Sigmoid colon (tissue), 7 donors: ENCODE measurements at regions of chr20 and their contacts with region 1.

Region 1: DNA sequence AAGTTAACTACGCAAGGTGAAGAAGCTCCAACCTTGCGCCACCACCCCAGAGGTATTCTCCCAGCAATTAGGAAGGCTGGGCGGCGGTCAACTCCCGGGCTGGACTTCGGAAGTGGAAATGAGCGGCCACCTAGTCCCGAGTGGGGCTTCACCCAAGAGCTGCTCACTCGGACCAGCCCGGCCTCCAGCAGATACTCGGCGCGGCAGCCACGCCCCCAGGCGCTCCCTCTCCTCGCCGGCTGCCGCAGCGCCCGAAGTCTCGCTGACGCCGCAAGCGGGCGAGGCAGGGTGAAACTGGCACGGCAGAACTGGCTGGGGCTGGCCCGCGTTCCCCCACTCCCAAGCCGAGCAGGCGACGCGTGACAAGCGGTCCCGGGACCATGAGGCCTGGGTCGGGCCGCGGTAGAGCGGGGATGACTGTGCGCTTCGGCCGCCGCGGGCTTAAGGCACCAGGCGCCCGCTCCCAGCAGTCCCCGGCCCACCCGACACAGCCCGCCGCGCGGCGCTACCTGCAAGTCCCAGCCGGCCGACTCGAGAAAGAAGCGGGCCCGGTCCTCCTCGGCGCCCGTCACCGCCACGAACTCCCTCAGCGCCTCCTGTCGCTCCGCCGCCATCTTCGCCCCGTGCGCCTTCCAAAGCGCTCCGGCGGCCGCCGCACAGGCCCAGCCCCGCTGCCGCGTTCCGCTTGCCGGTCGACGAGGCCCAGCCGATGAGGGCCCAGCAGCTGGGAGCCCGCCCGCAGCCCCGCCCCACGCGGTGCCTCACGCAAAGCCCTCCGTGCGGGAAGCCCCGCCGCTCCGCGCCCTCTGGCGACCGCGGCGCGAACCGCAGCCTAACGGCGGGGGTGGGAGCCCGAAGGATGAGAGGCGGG is at the start of gene NSFL1C:
- DNase-seq: peak; percentile 96
- H3K4me3 ChIP-seq: peak within 1 kb of the TSS; percentile 77 to 97 (median 92)
- H3K27ac ChIP-seq: peak within 1 kb of the TSS; percentile 84 to 89 (median 87)
- H3K4me1 ChIP-seq: peaks cover 0 to 45% (median 35%) of the 10 kb centered on the region in 4 donors
- H3K27me3 ChIP-seq: no peaks in the 10 kb centered on the region
- CTCF ChIP-seq: peak; percentile 49 to 98 (median 66)
- EP300 ChIP-seq: no peak
- POLR2A ChIP-seq: peak; percentile 32 to 35
- total RNA-seq, gene NSFL1C: 33.5 to 46.5 (median 40.5) TPM

Region 2: DNA sequence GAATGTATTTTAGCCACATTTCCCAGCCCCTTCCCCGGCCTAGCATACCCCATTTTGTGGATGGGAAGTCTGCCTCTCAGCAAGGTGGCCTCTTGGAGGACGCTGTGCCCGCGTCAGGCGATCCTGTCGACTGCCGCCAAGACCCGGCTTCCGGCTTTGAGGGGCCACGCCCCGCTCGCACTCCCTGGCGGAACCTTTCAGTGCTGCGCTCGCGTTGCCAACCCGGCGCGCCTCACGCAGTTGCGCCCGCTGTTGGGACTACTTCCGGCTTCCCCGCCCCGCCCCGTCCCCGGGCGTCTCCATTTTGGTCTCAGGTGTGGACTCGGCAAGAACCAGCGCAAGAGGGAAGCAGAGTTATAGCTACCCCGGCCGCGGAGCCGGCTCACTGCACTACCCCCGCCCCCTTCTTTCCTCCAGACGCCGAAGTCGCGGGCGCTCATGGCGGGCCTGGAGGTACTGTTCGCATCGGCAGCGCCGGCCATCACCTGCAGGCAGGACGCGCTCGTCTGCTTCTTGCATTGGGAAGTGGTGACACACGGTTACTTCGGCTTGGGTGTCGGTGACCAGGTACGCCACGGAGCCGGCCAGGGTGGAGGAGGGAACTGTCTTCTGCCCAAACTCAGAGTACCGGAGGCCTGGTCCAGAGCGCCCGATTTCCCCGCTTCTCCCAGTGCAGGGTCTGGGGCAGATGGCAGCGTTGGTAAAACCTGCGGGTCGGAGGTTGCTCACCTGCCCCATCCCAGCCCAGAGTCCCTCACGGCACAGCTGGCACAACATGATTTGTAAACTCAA is 347.9 kb before region 1 on chr20 and contains the start of gene PSMF1:
- intact Hi-C with region 1: loop called (anchors 2 kb)
- DNase-seq: peak; percentile 97
- H3K4me3 ChIP-seq: peak within 1 kb of the TSS; percentile 95 to 99 (median 97)
- H3K27ac ChIP-seq: peak within 1 kb of the TSS; percentile 83 to 86 (median 84)
- H3K4me1 ChIP-seq: peaks cover 0 to 52% (median 47%) of the 10 kb centered on the region in 4 donors
- H3K27me3 ChIP-seq: no peaks in the 10 kb centered on the region
- CTCF ChIP-seq: peak in 1 of 4 experiments; percentile 11
- EP300 ChIP-seq: no peak
- POLR2A ChIP-seq: peak in 1 of 2 donors; percentile 37
- total RNA-seq, gene PSMF1: 54.2 to 148 (median 110) TPM

Region 3: GRCh38 chr20:1392823-1393506 is 73.5 kb before region 1 on chr20 and contains the start of gene FKBP1A:
- intact Hi-C with region 1: loop called (anchors 2 kb)
- DNase-seq: peak; percentile 96
- H3K4me3 ChIP-seq: peak within 1 kb of the TSS; percentile 62 to 89 (median 83)
- H3K27ac ChIP-seq: peak within 1 kb of the TSS; percentile 81 to 83 (median 82)
- H3K4me1 ChIP-seq: peaks cover 0 to 53% (median 45%) of the 10 kb centered on the region in 4 donors
- H3K27me3 ChIP-seq: peaks cover 0 to 9% (median 0%) of the 10 kb centered on the region in 3 donors
- CTCF ChIP-seq: peak in 1 of 4 experiments; percentile 16
- EP300 ChIP-seq: no peak
- POLR2A ChIP-seq: peak; percentile 35 to 40
- total RNA-seq, gene FKBP1A: 71.7 to 118 (median 85.3) TPM

Region 4: DNA sequence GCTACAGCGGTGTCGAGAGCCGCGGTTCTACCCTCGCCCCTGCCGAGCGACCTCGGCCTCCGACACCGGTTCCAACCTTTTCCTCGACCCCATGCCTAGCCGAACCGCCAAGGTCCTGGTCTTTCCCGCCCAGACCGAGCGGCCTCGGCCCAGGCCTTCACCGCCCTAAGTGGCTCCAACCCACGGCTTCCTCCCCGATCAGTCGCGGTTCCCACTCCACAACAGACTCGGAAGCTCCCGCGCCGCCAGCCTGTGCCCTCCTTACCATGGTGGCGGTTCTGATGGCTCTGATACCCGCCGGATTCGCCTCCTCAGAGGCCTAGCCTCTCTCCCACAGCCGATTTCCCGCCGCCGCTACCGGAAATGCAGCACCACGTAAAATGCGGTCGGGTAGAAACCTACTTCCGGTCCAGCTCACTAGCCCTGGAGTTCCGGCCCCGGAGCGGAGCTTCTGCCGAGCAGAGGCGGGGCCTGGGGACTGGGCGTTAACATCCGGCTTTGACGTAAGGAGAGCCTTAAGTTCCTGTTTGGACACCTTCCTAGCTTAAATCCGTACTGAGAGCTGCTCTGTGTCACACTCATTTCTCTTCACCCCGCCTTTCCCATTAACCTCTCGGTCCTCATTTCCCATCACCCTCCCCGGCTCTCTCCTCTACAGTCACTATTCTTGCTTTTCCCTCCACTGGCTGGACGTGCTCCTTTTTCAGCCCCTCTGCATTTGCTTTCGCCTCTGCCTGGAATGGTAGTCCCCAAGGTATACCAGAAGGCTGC is 1004.2 kb after region 1 on chr20 and contains the start of gene SNRPB:
- intact Hi-C with region 1: loop called (anchors 5 kb)
- DNase-seq: peak; percentile 99
- H3K4me3 ChIP-seq: peak within 1 kb of the TSS; percentile 45 to 79 (median 69)
- H3K27ac ChIP-seq: peak within 1 kb of the TSS; percentile 85 to 95 (median 92)
- H3K4me1 ChIP-seq: peaks cover 0 to 32% (median 27%) of the 10 kb centered on the region in 4 donors
- H3K27me3 ChIP-seq: no peaks in the 10 kb centered on the region
- CTCF ChIP-seq: no peak
- EP300 ChIP-seq: peak in 1 of 4 donors; percentile 12
- POLR2A ChIP-seq: peak; percentile 62 to 83
- total RNA-seq, gene SNRPB: 80.0 to 165 (median 142) TPM